Endothelial cell of umbilical vein (primary cell): ENCODE measurements at regions of chr2 and their contacts with region 1.

Region 1: GRCh38 chr2:200483729-200484198 is 26.1 kb downstream of the KCTD18 start:
- DNase-seq: no peak
- H3K4me3 ChIP-seq: no peak overlapping the region
- H3K27ac ChIP-seq: no peak overlapping the region
- H3K4me1 ChIP-seq: no peaks in the 10 kb centered on the region
- H3K27me3 ChIP-seq: no peaks in the 10 kb centered on the region
- CTCF ChIP-seq: peak; percentile 6 to 33
- POLR2A ChIP-seq: no peak

Region 2: DNA sequence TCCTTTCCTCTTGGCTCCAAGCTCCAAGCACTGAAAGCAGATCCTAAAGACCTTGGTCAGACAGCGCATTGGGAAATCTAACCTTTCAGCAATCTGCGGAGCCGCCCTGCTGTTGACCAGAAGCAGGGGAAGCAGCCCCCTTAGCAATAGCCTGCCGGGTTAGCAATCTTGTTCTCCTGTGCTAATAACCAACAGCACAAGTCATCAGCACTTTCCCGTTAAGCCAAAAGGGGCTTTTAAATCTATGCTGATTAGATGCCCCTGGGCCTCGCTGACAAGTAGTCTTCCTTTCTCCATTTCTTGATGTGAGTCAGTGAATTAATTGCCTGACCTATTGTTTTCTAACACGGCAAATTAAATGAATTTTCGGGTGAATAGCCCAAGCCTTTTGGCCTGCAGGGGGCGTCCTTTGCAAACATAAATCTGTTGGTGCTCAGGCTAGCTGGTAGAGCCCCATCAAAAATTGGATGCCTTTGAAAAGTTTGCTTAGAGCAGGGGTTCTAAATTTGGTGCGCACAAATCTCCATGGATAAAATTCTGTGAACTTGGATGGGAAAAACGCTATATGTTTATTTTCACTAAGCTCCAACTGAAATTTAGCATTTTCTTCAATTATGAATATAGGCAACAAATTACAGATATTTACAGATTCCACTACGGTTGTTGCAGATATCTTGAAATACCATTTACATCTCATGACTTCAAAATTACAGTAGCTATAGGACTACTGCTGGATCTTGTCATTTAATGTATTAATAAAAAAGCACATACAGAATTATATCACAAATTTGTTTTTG is 503.7 kb before region 1 on chr2:
- CTCF ChIA-PET with region 1: interaction called, 149 read pairs
- POLR2A ChIA-PET with region 1: no interaction called
- dilution Hi-C with region 1: no loop called
- intact Hi-C with region 1: loop called (anchors 1 kb)
- DNase-seq: peak; percentile 91
- H3K4me3 ChIP-seq: peak overlapping the region in 2 of 3 experiments; percentile 8 to 9
- H3K27ac ChIP-seq: no peak overlapping the region
- H3K4me1 ChIP-seq: peaks cover 9% of the 10 kb centered on the region
- H3K27me3 ChIP-seq: no peaks in the 10 kb centered on the region
- CTCF ChIP-seq: peak; percentile 66 to 92
- POLR2A ChIP-seq: no peak

Region 3: DNA sequence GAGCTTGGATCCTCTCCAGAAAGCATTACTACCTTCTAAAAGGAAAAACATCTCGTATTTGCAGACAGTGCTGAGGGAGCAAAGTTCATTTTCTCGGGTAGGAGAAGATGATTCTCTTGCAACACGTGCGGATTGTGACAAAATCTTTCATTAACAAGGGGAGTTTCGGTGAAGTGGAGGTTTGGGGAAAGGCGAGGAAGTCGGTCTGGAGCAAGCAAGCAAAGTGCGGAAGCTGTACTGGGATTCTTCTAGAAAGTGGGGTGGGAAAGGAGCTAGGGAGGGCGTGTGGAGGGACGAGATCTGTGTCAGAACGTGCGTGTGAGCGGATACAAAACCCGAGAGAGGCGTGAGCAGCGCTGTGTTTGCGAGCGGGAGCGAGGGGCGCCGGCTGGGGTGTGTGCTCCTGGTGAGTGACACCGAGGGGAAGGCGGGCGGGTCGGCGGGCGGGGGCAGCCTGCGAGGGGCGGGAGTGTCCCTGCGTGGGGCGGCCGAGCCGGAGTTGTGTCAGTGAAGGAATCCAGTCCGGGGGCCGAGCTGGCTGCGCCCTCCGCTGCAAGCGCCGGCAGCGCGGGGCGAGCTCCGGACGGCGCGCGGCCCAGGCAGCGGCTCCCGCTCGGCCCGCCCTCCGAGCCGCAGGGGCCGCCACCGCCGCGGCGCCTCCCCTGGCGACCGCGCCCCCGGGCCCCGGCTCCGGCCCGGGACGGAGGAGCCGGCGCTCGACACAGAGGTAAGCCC is 177.4 kb before region 1 on chr2 and contains the start of gene SPATS2L:
- CTCF ChIA-PET with region 1: interaction called, 16 read pairs
- POLR2A ChIA-PET with region 1: no interaction called
- dilution Hi-C with region 1: no loop called
- intact Hi-C with region 1: loop called (anchors 1 kb)
- DNase-seq: peak; percentile 71
- H3K4me3 ChIP-seq: peak within 1 kb of the TSS; percentile 83 to 95 (median 93)
- H3K27ac ChIP-seq: peak within 1 kb of the TSS; percentile 39
- H3K4me1 ChIP-seq: peaks cover 14% of the 10 kb centered on the region
- H3K27me3 ChIP-seq: no peaks in the 10 kb centered on the region
- CTCF ChIP-seq: no peak
- POLR2A ChIP-seq: peak; percentile 74
- total RNA-seq, gene SPATS2L: 63.8 and 72.9 TPM in 2 replicates

Region 4: DNA sequence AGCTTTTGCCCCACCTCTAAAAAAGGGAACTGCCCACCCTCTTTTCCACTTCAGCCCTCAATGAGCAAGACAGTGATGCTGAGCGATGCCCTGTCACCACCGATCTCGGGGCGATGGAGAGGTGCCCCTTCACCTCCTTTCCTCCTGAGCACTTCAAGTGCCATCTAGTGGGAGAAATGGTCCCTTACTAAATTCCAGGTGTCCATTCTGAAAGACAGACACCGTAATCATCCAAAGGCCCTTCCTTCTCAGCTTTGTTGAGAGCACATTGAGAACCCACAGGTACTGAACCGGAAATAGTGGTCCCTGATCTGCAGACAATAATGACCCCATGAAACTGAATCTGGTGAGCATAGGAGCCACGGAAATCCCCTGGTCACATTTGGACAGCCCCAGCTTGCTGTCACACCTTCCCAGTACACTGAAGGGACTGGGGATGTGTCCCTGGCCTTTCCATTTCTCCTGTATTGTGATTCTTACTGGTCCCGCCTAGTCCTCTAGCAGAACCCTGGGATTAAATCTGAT is 12.4 kb before region 1 on chr2:
- CTCF ChIA-PET with region 1: interaction called, 32 read pairs
- POLR2A ChIA-PET with region 1: no interaction called
- dilution Hi-C with region 1: no loop called
- intact Hi-C with region 1: no loop called
- DNase-seq: peak; percentile 21
- H3K4me3 ChIP-seq: no peak overlapping the region
- H3K27ac ChIP-seq: no peak overlapping the region
- H3K4me1 ChIP-seq: no peaks in the 10 kb centered on the region
- H3K27me3 ChIP-seq: no peaks in the 10 kb centered on the region
- CTCF ChIP-seq: peak; percentile 30 to 45
- POLR2A ChIP-seq: no peak

Region 5: GRCh38 chr2:200509612-200510433 is 26.1 kb after region 1 on chr2 and contains the start of gene KCTD18:
- CTCF ChIA-PET with region 1: interaction called, 11 read pairs
- POLR2A ChIA-PET with region 1: no interaction called
- dilution Hi-C with region 1: no loop called
- intact Hi-C with region 1: no loop called
- DNase-seq: peak; percentile 86
- H3K4me3 ChIP-seq: peak within 1 kb of the TSS; percentile 45 to 64 (median 62)
- H3K27ac ChIP-seq: peak within 1 kb of the TSS; percentile 23
- H3K4me1 ChIP-seq: peaks cover 7% of the 10 kb centered on the region
- H3K27me3 ChIP-seq: peaks cover 21 to 36% of the 10 kb centered on the region in 2 experiments
- CTCF ChIP-seq: peak; percentile 88 to 91
- POLR2A ChIP-seq: peak; percentile 73
- total RNA-seq, gene KCTD18: 5.4 and 6.6 TPM in 2 replicates

Region 6: GRCh38 chr2:200703127-200703925 is 219.6 kb after region 1 on chr2:
- CTCF ChIA-PET with region 1: interaction called, 39 read pairs
- POLR2A ChIA-PET with region 1: no interaction called
- dilution Hi-C with region 1: no loop called
- intact Hi-C with region 1: loop called (anchors 1 kb)
- DNase-seq: peak; percentile 58
- H3K4me3 ChIP-seq: no peak overlapping the region
- H3K27ac ChIP-seq: no peak overlapping the region
- H3K4me1 ChIP-seq: no peaks in the 10 kb centered on the region
- H3K27me3 ChIP-seq: peaks cover 16 to 22% of the 10 kb centered on the region in 2 experiments
- CTCF ChIP-seq: peak; percentile 17 to 21
- POLR2A ChIP-seq: no peak